ENCODE measurements at regions of chr2 and their contacts with region 1.

Region 1: GRCh38 chr2:86623651-86624541 is at the start of gene RNF103:
- DNase-seq: peak; percentile 83 to 97 (median 88)
- ATAC-seq: peak; percentile 93
- H3K4me3 ChIP-seq: peak within 1 kb of the TSS; percentile 85
- H3K4me3 Mint-ChIP-seq: peak within 1 kb of the TSS; percentile 86 to 99 (median 93)
- H3K27ac ChIP-seq: peak within 1 kb of the TSS; percentile 97
- H3K27ac Mint-ChIP-seq: peak within 1 kb of the TSS; percentile 90 to 99 (median 94)
- H3K4me1 ChIP-seq: peaks cover 11 to 17% of the 10 kb centered on the region in 2 donors
- H3K4me1 Mint-ChIP-seq: peaks cover 21 to 42% (median 34%) of the 10 kb centered on the region in 7 donors
- H3K27me3 ChIP-seq: no peaks in the 10 kb centered on the region
- H3K27me3 Mint-ChIP-seq: peaks cover 0 to 30% (median 0%) of the 10 kb centered on the region in 5 donors
- total RNA-seq, gene RNF103: 15.6 to 71.2 (median 37.8) TPM

Region 2: GRCh38 chr2:84970868-84971509 is 1652.9 kb before region 1 on chr2 and contains the start of gene KCMF1:
- CTCF ChIA-PET with region 1: no interaction called
- POLR2A ChIA-PET with region 1: no interaction called
- intact Hi-C with region 1: loop called in 1 of 2 experiments (anchors 5 kb)
- DNase-seq: peak; percentile 56 to 83 (median 68)
- ATAC-seq: peak; percentile 72
- H3K4me3 ChIP-seq: peak within 1 kb of the TSS; percentile 85
- H3K4me3 Mint-ChIP-seq: peak within 1 kb of the TSS; percentile 89 to 100 (median 99)
- H3K27ac ChIP-seq: peak within 1 kb of the TSS; percentile 95
- H3K27ac Mint-ChIP-seq: peak within 1 kb of the TSS; percentile 97 to 100 (median 99)
- H3K4me1 ChIP-seq: peaks cover 31 to 33% of the 10 kb centered on the region in 2 donors
- H3K4me1 Mint-ChIP-seq: peaks cover 44 to 67% (median 57%) of the 10 kb centered on the region in 7 donors
- H3K27me3 ChIP-seq: no peaks in the 10 kb centered on the region
- H3K27me3 Mint-ChIP-seq: peaks cover 0 to 4% (median 0%) of the 10 kb centered on the region in 5 donors
- total RNA-seq, gene KCMF1: 57.7 to 81.3 (median 60.8) TPM

Region 3: DNA sequence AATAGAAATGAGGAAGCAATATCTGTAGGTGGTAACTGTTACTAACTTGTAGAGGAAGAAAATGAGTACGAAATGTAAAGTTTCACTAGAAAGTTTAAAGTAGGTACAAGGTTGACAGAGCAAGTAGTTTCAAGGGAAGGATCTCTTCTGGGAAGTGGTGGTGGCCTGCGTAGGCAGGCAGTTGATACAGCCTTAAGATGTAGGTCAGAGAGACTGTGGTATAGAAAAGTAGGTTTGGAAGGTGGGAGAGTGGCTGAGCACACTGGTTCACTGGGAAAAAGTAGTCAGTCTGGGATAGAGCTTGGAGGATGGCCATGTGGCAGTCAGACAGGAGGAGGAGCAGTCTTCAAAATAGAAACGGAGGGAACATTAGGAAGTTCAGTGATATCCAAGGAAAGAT is 159.2 kb before region 1 on chr2:
- CTCF ChIA-PET with region 1: no interaction called
- POLR2A ChIA-PET with region 1: no interaction called
- intact Hi-C with region 1: loop called in 1 of 2 experiments (anchors 5 kb)
- DNase-seq: no peak
- ATAC-seq: no peak
- H3K4me3 ChIP-seq: no peak overlapping the region
- H3K4me3 Mint-ChIP-seq: peak overlapping the region in 5 of 10 donors; percentile 3 to 60 (median 21)
- H3K27ac ChIP-seq: no peak overlapping the region
- H3K27ac Mint-ChIP-seq: peak overlapping the region; percentile 28 to 81 (median 73)
- H3K4me1 ChIP-seq: peaks cover 0 to 15% of the 10 kb centered on the region in 2 donors
- H3K4me1 Mint-ChIP-seq: peaks cover 29 to 79% (median 65%) of the 10 kb centered on the region in 7 donors
- H3K27me3 ChIP-seq: no peaks in the 10 kb centered on the region
- H3K27me3 Mint-ChIP-seq: no peaks in the 10 kb centered on the region

Region 4: DNA sequence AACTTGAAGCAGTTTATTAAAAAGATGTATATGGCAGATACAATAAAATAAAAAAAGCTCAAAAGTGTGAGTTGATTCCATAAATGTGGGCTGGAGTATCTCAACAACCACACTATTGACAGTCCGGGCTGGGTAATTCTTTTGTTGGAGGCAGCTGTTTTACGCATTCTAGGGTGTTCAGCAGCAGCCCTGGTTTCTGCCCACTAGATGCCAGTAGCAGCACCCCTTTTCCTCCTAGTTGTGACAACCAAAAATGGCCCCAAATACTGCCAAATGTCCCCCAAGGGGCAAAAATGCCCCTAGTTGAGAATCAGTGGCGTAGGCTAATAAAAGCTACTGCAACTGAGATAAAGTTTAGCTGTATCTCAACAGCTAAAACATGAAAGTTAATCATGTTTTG is 105.4 kb before region 1 on chr2:
- CTCF ChIA-PET with region 1: interaction called, 3 read pairs
- POLR2A ChIA-PET with region 1: interaction called, 6 read pairs
- intact Hi-C with region 1: loop called in 1 of 2 experiments (anchors 2 kb)
- DNase-seq: peak in 7 of 9 donors; percentile 23 to 59 (median 53)
- ATAC-seq: peak; percentile 73
- H3K4me3 ChIP-seq: no peak overlapping the region
- H3K4me3 Mint-ChIP-seq: no peak overlapping the region
- H3K27ac ChIP-seq: no peak overlapping the region
- H3K27ac Mint-ChIP-seq: peak overlapping the region in 1 of 9 donors; percentile 2
- H3K4me1 ChIP-seq: no peaks in the 10 kb centered on the region
- H3K4me1 Mint-ChIP-seq: peaks cover 0 to 16% (median 8%) of the 10 kb centered on the region in 7 donors
- H3K27me3 ChIP-seq: no peaks in the 10 kb centered on the region
- H3K27me3 Mint-ChIP-seq: no peaks in the 10 kb centered on the region

Region 5: DNA sequence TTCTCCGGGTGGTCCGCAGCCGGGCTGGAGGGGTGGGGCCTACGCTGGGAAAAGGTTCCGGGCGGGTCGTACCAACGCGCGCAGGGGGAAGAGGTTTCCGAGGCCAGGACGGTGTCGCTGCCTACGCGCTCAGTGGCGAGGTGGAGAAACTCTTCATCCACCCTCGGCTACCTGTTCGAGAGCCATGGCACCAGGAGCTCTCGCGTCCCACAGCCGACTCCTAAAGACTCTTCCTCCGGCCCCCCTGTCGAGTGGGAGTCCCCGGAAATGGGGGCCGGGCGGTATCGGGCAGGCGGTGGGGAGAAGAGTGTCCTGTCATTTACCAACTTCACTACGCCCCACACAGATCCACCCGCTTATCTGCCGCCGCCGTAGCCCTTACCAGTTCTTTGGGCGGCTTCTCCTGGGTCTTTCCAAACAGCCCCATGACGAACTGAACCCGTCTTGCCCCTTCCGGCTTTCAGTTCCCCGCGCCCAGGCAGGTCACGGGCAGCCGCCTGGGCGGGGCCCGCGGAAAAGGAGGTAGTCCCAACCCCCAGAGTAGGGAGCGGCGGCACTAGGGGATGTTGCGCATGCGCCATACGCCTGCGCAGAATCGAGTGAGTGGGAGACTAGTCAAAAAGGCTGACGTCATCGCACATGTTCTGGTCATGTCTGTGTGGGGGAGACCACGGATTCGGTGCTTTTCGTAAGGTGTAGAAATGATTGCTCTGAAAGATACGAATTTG is 60.8 kb before region 1 on chr2 and contains the start of gene CHMP3:
- CTCF ChIA-PET with region 1: no interaction called
- POLR2A ChIA-PET with region 1: interaction called, 27 read pairs
- intact Hi-C with region 1: loop called (anchors 1 kb)
- DNase-seq: peak; percentile 95 to 98 (median 96)
- ATAC-seq: peak; percentile 94
- H3K4me3 ChIP-seq: peak within 1 kb of the TSS; percentile 72
- H3K4me3 Mint-ChIP-seq: peak within 1 kb of the TSS in 9 of 10 donors; percentile 95 to 99 (median 97)
- H3K27ac ChIP-seq: peak within 1 kb of the TSS; percentile 99
- H3K27ac Mint-ChIP-seq: peak within 1 kb of the TSS; percentile 96 to 100 (median 98)
- H3K4me1 ChIP-seq: peaks cover 11 to 25% of the 10 kb centered on the region in 2 donors
- H3K4me1 Mint-ChIP-seq: peaks cover 11 to 42% (median 29%) of the 10 kb centered on the region in 7 donors
- H3K27me3 ChIP-seq: no peaks in the 10 kb centered on the region
- H3K27me3 Mint-ChIP-seq: peaks cover 0 to 7% (median 0%) of the 10 kb centered on the region in 5 donors
- total RNA-seq, gene CHMP3: 39.9 to 103 (median 71.4) TPM

Region 6: DNA sequence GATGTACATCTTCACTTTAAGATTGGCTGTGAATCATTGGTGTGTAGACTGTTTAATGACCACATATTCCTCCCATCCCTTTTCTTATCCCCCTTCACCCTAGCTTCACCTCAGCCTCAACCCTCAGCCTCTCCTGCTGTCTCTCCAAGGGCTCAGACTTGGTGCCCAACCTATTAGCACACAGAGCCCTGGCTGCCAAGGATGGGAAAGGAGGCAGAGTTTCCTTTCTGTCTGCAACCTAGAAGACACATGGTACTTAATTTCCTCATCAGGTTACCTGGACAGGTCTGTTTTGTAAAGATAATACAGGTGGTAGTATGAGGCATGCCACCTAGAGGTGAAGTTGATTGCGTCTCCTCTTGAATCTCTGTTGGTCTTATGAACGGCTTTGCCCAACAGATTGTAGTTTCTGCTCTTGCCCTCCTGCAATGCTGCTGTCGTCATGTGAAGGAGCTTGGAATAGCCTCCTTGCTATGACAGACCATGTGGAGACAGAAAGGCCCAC is 51.7 kb after region 1 on chr2:
- CTCF ChIA-PET with region 1: no interaction called
- POLR2A ChIA-PET with region 1: no interaction called
- intact Hi-C with region 1: loop called in 1 of 2 experiments (anchors 5 kb)
- DNase-seq: peak in 2 of 9 donors; percentile 11 to 13
- ATAC-seq: no peak
- H3K4me3 ChIP-seq: no peak overlapping the region
- H3K4me3 Mint-ChIP-seq: no peak overlapping the region
- H3K27ac ChIP-seq: no peak overlapping the region
- H3K27ac Mint-ChIP-seq: peak overlapping the region in 1 of 9 donors; percentile 3
- H3K4me1 ChIP-seq: no peaks in the 10 kb centered on the region
- H3K4me1 Mint-ChIP-seq: peaks cover 0 to 1% (median 0%) of the 10 kb centered on the region in 7 donors
- H3K27me3 ChIP-seq: no peaks in the 10 kb centered on the region
- H3K27me3 Mint-ChIP-seq: peaks cover 0 to 3% (median 0%) of the 10 kb centered on the region in 5 donors

Measured in naive thymus-derived CD4-positive, alpha-beta T cell (primary cell).